Activated T-helper 1 cell treated with anti-CD3 and anti-CD28 coated beads, Interleukin-12 subunit alpha, Interleukin-12 subunit beta, Interleukin-2, Interleukin-4 antibody, amounts not matched to agents 30 ng/mL and 10 ng/mL and 1 ng/mL, durations not matched to agents 14 hours and 24 hours and 36 hours (primary cell): ENCODE measurements at regions of chr1 and their contacts with region 1.

Region 1: DNA sequence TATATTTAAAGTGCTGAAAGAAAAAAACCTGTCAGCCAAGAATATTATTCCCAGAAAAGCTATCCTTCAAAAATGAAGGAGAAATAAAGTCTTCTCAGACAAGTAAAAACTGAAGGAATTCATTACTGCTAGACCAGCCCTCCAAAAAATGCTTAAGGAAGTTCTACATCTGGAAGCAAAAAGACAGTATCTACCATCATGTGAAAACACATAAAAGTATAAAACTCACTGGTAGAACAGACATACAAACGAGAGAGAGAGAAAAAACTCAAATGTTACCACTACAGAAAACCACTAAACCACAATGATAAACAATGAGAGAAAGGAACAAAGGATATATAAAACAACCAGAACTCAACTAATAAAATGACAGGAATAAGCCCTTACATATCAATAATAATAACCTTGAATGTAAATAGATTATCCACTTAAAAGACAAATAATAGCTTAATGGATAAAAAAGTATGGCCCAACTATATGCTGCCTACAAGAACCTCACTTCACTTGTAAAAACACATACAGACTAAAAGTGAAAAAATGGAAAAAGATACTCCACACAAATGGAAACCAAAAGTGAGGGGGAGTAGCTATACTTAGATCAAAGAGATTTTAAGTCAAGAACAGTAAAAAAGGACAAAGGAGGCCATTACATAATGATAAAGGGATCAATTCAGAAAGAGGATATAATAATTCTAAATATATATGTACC is 22.0 kb downstream of the NSL1 start:
- DNase-seq: no peak
- H3K4me3 Mint-ChIP-seq: no peak overlapping the region
- H3K27ac Mint-ChIP-seq: peak overlapping the region; percentile 85
- H3K4me1 Mint-ChIP-seq: peaks cover 43% of the 10 kb centered on the region
- H3K27me3 Mint-ChIP-seq: peaks cover 3% of the 10 kb centered on the region

Region 2: DNA sequence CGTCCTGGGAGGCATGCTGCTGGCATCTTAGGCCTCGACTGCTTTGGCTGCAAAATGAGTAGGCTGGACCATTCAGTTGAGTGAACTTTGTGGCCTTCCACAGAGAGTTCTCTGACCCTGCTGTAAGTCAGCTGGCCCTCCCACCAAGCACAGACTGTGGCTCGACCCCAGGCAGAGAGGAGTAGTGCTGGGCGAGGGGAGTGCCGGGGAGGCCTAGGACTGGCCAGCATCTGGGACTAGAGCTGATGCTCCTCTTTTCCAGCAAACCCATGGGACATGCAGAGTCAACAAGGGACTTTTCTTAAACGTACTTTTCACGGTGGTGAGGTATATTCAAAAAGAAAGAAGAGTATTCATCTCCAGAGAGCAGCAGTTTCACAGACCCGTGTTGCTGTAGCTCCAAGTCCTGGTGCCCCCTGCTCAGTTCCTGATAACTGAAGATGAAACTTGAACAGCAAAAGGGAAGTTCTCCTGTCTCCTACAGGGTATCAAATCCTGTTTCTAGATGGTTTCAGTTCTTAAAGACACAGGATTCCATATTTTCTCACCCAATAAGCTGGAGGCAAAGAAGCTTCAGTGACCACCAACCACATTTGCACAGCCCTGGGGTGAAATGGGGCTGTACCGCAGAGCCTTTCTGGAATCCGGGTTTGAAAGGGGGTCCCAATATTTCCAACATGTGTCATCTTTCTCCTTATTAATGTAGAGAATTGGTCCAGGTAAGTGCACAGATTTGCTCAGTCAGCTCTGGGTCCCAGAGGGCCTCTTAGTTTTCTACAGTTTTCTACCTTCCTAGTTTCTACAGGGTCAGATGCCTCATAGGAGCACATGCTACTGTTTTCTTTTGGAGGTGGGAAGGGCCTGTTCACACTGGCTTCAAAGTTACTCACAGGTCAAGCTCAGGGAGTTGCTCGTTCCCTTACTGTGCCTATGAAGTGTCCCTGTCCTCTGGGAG is 90.9 kb before region 1 on chr1:
- intact Hi-C with region 1: loop called (anchors 1 kb)
- DNase-seq: no peak
- H3K4me3 Mint-ChIP-seq: no peak overlapping the region
- H3K27ac Mint-ChIP-seq: peak overlapping the region; percentile 75
- H3K4me1 Mint-ChIP-seq: peaks cover 55% of the 10 kb centered on the region
- H3K27me3 Mint-ChIP-seq: no peaks in the 10 kb centered on the region

Region 3: DNA sequence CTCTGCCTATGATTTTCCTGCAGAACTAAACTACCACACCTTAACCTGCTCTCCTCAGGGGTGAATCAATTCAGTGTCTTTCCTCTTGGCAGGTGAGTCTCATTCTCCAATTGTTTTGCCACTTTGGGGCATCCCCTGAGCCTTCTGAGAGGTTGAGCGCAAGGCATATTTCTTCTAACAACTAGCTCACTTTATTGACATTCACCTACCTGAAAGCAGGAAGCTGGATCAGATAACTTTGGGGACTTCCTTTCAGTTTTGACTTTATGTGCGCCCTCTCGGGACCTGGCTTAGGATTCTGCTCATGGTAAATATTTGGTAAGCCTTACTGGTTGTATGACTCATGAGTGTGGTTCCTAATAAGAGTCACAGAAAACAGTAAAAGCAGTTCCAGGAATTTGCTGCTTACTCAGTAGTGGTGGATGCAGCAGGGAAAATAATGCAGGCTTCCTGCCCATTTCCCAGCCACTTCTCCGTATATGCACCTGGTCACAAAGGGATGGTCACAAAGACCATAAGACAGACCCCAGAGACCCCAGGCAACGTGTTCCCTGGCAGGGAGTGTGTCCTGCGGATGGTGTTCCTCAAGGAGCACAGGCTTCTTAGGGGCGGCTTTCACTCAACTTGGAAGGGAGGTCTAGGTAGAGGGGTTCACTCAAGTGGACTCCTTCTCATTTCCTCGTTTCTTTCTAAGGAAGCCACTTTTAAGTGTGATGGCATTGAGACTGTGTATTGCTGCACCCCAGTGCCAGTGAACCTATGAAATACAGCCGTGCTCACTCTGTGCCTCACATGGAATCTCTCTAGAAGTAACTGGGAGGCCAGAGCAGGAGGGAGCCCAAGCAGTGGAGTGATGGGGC is 48.0 kb before region 1 on chr1:
- intact Hi-C with region 1: loop called (anchors 1 kb)
- DNase-seq: peak; percentile 39
- H3K4me3 Mint-ChIP-seq: peak overlapping the region; percentile 34
- H3K27ac Mint-ChIP-seq: peak overlapping the region; percentile 82
- H3K4me1 Mint-ChIP-seq: peaks cover 44% of the 10 kb centered on the region
- H3K27me3 Mint-ChIP-seq: peaks cover 6% of the 10 kb centered on the region

Region 4: DNA sequence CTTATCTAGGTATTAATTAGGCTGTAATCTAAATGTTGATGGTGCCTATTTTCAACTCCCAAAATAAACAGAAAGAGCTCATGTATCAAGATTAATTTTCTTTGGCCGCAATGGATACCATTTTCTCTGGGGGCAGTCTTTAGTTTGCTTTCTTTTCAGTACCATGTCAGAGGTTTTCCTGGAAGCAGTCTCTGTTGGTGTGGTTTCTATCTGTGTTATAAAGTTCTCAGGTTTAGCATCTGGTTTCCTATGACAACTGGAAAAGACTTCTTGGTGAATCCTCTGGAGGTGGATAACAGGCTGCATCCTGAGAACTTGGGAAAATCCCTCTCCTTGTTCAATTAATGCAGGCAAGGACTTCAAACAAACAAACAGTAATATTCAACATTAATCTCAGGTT is 31.3 kb before region 1 on chr1:
- intact Hi-C with region 1: loop called (anchors 1 kb)
- DNase-seq: no peak
- H3K4me3 Mint-ChIP-seq: peak overlapping the region; percentile 43
- H3K27ac Mint-ChIP-seq: peak overlapping the region; percentile 86
- H3K4me1 Mint-ChIP-seq: peaks cover 42% of the 10 kb centered on the region
- H3K27me3 Mint-ChIP-seq: no peaks in the 10 kb centered on the region

Region 5: GRCh38 chr1:212749821-212750535 is 19.6 kb before region 1 on chr1:
- intact Hi-C with region 1: loop called (anchors 1 kb)
- DNase-seq: no peak
- H3K4me3 Mint-ChIP-seq: peak overlapping the region; percentile 8
- H3K27ac Mint-ChIP-seq: peak overlapping the region; percentile 76
- H3K4me1 Mint-ChIP-seq: peaks cover 55% of the 10 kb centered on the region
- H3K27me3 Mint-ChIP-seq: peaks cover 2% of the 10 kb centered on the region

Region 6: DNA sequence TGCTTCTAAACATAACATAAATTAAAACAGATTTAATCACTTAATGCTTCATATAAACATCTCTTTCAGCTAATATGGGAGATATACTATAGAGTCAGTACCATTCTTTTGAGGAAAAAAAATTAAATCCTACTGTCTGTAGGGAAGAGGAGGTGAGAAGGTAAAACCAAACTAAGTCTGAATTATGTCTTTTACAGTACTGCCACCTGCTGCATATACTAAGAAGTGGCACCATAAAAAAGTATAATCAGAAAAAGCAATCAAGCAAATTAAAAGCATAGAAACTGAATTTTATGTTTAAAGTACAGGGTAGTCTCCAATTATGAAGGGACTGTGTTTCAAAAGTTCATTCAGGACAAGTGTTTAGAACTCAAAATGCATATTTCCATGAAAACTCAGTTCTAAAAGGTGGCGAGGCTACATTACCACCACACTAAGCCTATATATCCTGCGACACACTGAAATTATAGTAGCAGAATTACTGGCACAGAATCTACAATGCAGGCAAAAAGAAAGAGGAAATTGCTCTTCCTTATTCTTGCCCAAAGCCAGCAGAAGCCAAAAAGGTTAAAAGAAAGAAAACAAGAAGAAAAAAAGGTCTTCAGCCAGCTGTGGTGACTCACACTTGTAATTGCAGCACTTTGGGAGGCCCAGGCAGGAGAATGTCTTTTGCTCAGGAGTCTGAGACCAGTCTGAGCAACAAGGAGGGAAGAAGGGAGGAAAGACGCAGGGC is 13.0 kb after region 1 on chr1:
- intact Hi-C with region 1: loop called (anchors 2 kb)
- DNase-seq: no peak
- H3K4me3 Mint-ChIP-seq: no peak overlapping the region
- H3K27ac Mint-ChIP-seq: no peak overlapping the region
- H3K4me1 Mint-ChIP-seq: peaks cover 4% of the 10 kb centered on the region
- H3K27me3 Mint-ChIP-seq: no peaks in the 10 kb centered on the region